ENCODE measurements at regions of chr22 and their contacts with region 1.

Region 1: DNA sequence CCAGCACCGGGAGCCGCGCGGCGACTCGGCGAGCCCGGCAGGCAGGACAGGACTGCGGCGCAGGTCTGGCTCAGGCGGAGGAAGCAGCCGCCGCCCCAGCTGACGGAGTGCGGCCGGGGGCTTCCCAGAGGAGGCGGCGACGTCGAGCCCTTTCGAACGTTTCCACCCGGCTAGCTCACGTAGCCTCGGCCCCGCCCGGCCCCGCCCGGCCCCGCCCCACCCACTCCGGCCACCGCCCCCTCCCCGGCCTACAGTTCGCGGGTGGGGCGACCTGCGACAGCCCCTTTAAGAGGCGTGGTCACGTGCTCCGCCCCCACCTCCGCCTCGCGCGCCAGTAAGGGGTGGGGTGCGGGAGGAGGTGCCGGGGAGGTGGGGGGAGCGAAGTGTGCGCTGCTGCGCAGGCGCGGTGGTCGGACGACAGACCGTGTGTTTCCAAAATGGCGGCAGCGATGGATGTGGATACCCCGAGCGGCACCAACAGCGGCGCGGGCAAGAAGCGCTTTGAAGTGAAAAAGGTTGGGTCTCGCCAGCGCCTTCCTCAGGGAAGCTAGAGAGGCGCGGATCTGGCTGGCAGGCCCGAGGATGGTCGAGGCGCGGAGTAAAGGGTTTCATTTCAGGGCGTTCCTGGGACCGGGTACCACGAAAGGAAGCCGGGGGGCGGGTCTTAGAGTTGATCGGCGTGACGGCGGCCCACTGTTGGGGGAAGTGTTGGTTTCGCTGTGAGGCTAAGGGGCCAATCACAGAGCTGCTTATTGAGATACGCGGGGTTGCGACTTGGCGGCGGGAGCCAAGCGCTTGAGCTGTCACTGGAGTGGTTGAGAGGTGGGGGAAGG is at the start of gene RBX1:
- DNase-seq: peak; percentile 80
- ATAC-seq: peak; percentile 97
- H3K4me3 ChIP-seq: peak within 1 kb of the TSS; percentile 73 to 97
- H3K27ac ChIP-seq: peak within 1 kb of the TSS; percentile 94
- H3K4me1 ChIP-seq: 0 out of 2 replicates have a peak, but pooled peaks cover 3% of the 10 kb centered on the region
- H3K27me3 ChIP-seq: no peaks in the 10 kb centered on the region
- CTCF ChIP-seq: no peak
- total RNA-seq, gene RBX1: 50.7 TPM

Region 2: DNA sequence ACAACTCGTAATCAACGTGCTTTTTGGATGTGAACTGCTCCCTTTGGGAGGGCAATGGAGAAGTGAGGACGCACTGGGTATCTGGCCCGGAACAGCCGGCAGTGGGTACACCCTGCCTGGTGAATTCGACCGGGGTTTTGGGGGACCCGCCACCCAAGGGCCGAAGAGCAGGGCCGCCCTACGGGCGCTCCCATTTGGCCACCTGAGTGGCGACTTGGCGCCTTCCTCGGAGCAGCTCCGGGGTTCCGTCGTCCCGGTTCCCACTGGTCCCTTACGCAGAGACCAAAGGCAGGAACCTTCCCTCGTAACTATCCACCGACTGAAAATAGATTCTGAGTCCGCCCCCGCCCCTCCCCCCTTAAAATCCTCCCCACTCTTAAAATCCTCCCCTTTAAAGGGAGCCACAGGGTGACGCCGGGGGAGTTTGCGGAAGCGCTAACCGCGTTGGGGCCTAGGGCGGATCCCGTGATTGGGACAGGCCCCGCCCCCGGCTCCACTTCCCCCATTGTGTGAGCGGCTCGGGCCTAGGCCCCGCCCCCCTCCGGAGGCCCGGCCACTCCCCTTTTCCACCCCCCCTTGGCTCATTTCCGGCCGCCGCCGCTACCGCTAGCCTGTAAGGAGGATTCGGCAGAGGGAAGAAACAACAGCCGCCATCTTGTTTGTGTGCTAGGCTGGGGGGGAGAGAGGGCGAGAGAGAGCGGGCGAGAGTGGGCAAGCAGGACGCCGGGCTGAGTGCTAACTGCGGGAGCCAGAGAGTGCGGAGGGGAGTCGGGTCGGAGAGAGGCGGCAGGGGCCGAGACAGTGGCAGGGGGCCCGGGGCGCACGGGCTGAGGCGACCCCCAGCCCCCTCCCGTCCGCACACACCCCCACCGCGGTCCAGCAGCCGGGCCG is 140.2 kb after region 1 on chr22:
- CTCF ChIA-PET with region 1: no interaction called
- POLR2A ChIA-PET with region 1: interaction called, 9 read pairs
- in situ Hi-C with region 1: no loop called
- intact Hi-C with region 1: loop called (anchors 10 kb)
- DNase-seq: peak; percentile 86
- ATAC-seq: peak; percentile 93
- H3K4me3 ChIP-seq: peak overlapping the region; percentile 81 to 85
- H3K27ac ChIP-seq: peak overlapping the region; percentile 96
- H3K4me1 ChIP-seq: peaks cover 12% of the 10 kb centered on the region; the same call in 1 of the 2 replicates
- H3K27me3 ChIP-seq: no peaks in the 10 kb centered on the region
- CTCF ChIP-seq: no peak

Measured in Panc1 (cell line).